Heart left ventricle (tissue), 16 donors: ENCODE measurements at regions of chr18 and their contacts with region 1.

Region 1: GRCh38 chr18:27057519-27058234 is 127.4 kb downstream of the CHST9 start:
- DNase-seq: peak in 3 of 5 donors; percentile 29 to 50 (median 37)
- ATAC-seq: peak; percentile 96 to 97 (median 96)
- H3K4me3 ChIP-seq: peak overlapping the region in 9 of 12 donors; percentile 17 to 37 (median 27)
- H3K27ac ChIP-seq: peak overlapping the region; percentile 47 to 96 (median 88)
- H3K4me1 ChIP-seq: peaks cover 0 to 33% (median 5%) of the 10 kb centered on the region in 12 donors
- H3K27me3 ChIP-seq: no peaks in the 10 kb centered on the region
- CTCF ChIP-seq: no peak
- POLR2A ChIP-seq: no peak

Region 2: GRCh38 chr18:26745296-26746171 is 312.1 kb before region 1 on chr18:
- intact Hi-C with region 1: no loop called
- DNase-seq: no peak
- ATAC-seq: no peak
- H3K4me3 ChIP-seq: no peak overlapping the region
- H3K27ac ChIP-seq: no peak overlapping the region
- H3K4me1 ChIP-seq: peaks cover 0 to 12% (median 0%) of the 10 kb centered on the region in 12 donors
- H3K27me3 ChIP-seq: no peaks in the 10 kb centered on the region
- CTCF ChIP-seq: no peak
- POLR2A ChIP-seq: no peak

Region 3: DNA sequence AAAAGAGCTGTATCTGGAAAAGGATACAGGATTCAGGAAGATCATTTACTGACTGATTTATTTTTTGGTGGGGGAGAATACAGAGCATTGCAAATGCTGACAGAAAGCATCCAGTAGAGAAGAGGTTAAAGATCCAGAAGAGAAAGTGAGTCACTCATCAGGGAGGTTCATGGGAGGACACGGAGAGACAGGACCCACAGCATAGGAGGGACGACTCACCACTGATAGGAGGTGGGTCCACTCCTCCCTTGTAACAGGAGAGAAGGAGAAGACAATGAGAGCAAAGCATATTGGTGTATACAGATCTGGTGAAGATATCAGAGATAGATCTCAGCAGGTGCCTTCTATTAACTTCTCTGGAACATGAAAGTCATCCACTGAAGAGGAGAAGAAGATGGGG is 49.8 kb before region 1 on chr18:
- intact Hi-C with region 1: no loop called
- DNase-seq: no peak
- ATAC-seq: no peak
- H3K4me3 ChIP-seq: no peak overlapping the region
- H3K27ac ChIP-seq: no peak overlapping the region
- H3K4me1 ChIP-seq: peaks cover 0 to 2% (median 0%) of the 10 kb centered on the region in 12 donors
- H3K27me3 ChIP-seq: no peaks in the 10 kb centered on the region
- CTCF ChIP-seq: no peak
- POLR2A ChIP-seq: no peak

Region 4: GRCh38 chr18:27073404-27073830 is 15.7 kb after region 1 on chr18:
- intact Hi-C with region 1: loop called in 1 of 10 experiments (anchors 2 kb)
- DNase-seq: no peak
- ATAC-seq: no peak
- H3K4me3 ChIP-seq: no peak overlapping the region
- H3K27ac ChIP-seq: no peak overlapping the region
- H3K4me1 ChIP-seq: no peaks in the 10 kb centered on the region
- H3K27me3 ChIP-seq: no peaks in the 10 kb centered on the region
- CTCF ChIP-seq: no peak
- POLR2A ChIP-seq: no peak

Region 5: DNA sequence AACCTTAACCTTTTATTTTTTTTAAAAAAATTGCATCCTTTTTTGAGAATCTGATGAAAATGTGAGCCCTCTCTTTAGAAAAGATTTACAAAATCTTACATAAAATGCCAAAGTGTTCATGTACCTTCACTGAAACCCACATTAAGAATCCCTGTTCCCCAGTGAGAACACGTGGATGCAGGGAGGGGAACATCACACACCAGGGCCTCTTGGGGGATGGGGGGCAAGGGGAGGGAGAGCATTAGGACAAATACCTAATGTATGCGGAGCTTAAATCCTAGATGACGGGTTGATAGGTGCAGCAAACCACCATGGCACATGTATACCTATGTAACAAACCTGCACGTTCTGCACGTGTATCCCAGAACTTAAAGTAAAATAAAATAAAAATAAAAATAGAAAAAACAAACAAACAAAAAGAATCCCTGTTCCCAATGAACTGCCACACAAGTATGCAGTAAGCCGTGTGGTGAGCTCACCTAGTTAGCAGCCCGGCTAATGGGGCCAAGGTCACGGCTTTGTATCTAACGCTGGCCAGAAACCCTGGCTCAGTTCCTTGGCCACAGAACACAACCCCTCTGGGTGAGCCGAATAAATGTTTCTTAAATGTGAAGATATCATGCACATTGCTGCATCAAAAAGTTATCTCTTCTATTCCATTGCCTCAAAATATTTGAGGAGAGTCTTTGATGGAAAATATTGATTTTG is 86.1 kb after region 1 on chr18:
- intact Hi-C with region 1: loop called in 4 of 10 experiments (anchors 5 to 10 kb)
- DNase-seq: peak; percentile 43 to 83 (median 65)
- ATAC-seq: peak; percentile 92 to 99 (median 96)
- H3K4me3 ChIP-seq: no peak overlapping the region
- H3K27ac ChIP-seq: peak overlapping the region in 10 of 12 donors; percentile 2 to 79 (median 62)
- H3K4me1 ChIP-seq: peaks cover 0 to 9% (median 0%) of the 10 kb centered on the region in 12 donors
- H3K27me3 ChIP-seq: no peaks in the 10 kb centered on the region
- CTCF ChIP-seq: no peak
- POLR2A ChIP-seq: no peak